ENCODE measurements at regions of chr5 and their contacts with region 1.

Region 1: DNA sequence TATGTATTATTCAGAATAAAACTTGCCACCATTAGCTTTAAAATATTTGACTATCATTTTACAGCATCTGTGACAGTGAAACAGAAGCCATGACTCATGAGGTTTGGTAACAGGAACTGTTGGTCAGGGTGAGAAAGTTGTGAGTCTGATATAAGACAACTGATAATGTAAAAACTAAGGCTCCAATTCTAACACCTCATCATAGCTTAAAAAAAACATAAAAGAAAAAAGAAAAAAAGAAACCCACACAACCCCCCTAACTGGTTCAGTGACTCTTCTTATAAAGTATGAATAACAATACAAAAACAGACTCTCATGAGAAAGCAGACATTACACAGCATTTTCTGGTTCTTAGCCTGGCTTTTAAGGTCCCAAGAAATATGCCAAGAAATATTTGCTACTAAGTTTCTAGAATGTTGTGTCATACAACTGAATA is 85.8 kb downstream of the MRPS27 start:
- DNase-seq: peak; percentile 47
- H3K4me3 Mint-ChIP-seq: no peak overlapping the region
- H3K27ac Mint-ChIP-seq: peak overlapping the region; percentile 30
- H3K4me1 Mint-ChIP-seq: peaks cover 46% of the 10 kb centered on the region
- H3K27me3 Mint-ChIP-seq: no peaks in the 10 kb centered on the region

Region 2: DNA sequence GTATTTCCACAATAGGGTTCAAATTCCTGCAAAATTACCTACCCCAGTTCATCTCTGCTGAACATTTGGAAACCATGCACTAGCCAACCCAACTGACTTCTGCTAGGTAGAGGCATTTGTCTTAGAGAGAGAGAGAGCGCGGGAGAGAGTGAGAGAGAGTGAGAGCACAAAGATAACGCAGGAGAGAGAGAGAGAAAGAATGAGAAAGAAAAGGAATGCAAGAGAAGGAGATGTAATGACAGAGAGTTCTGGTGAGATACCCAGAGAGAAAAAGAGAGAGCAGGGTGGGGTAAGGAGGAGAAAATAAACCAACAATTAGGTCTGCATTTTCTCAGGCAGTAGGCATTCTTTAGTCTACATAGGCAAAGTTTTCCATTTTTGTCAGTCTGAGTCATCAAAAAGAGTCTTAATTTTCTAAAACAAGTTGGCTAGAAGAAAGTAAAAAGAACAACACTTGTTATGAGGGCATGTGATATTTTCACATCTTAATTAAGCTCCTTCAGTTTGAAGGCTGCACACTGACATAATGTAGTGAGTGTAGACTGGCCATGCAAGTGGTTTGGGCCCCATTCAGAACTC is 28.8 kb before region 1 on chr5:
- CTCF ChIA-PET with region 1: no interaction called
- intact Hi-C with region 1: loop called (anchors 1 kb)
- DNase-seq: no peak
- H3K4me3 Mint-ChIP-seq: no peak overlapping the region
- H3K27ac Mint-ChIP-seq: no peak overlapping the region
- H3K4me1 Mint-ChIP-seq: peaks cover 17% of the 10 kb centered on the region
- H3K27me3 Mint-ChIP-seq: no peaks in the 10 kb centered on the region

Region 3: GRCh38 chr5:72307968-72308852 is 73.9 kb after region 1 on chr5:
- CTCF ChIA-PET with region 1: interaction called, 4 read pairs
- intact Hi-C with region 1: loop called (anchors 1 kb)
- DNase-seq: peak; percentile 94
- H3K4me3 Mint-ChIP-seq: peak overlapping the region; percentile 85
- H3K27ac Mint-ChIP-seq: peak overlapping the region; percentile 92
- H3K4me1 Mint-ChIP-seq: peaks cover 32% of the 10 kb centered on the region
- H3K27me3 Mint-ChIP-seq: no peaks in the 10 kb centered on the region

Region 4: DNA sequence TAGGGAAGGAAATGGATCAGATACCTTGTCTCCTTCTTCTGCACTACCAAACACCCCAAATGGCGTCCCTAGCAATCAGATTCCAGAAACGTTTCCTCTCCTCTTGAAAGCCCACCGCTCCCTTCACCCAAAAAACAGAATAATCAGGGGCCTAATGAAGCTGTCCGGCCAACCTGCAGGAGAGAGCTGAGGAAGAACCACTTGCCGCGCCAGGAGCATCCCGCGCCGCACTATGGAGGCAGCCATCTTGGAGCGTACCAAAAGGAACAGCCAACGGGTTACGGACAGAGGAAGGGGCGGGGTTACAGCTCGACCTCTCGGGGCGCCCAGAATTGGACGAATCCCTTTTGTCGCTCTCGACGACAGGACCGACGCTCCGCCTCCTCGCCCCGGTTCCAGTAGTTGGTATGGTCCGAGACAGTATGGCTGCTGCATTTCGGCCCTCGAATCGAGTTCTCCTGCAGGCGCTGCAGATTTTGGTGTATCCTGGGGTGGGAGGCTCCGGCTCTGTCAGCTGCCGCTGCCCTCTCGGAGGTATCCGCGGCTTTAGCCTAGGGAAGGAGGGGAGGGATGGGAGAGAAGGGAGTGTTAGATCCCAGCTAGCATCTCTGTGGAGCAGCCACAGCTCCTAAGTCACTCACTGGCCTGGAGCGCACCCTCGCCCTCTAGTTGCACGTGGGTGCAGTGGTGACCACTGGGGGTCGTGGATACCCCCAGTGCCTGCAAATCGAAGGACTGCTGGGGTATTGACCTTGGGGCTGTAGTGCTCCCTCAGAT is 85.9 kb after region 1 on chr5 and contains the starts of genes MRPS27 and PTCD2:
- CTCF ChIA-PET with region 1: no interaction called
- intact Hi-C with region 1: loop called (anchors 1 kb)
- DNase-seq: peak; percentile 97
- H3K4me3 Mint-ChIP-seq: peak within 1 kb of the TSS; percentile 80
- H3K27ac Mint-ChIP-seq: peak within 1 kb of the TSS; percentile 91
- H3K4me1 Mint-ChIP-seq: peaks cover 45% of the 10 kb centered on the region
- H3K27me3 Mint-ChIP-seq: no peaks in the 10 kb centered on the region
- total RNA-seq, gene MRPS27: 86.0 to 95.8 TPM
- total RNA-seq, gene PTCD2: 10.1 to 11.6 TPM

Region 5: GRCh38 chr5:72347801-72348305 is 113.6 kb after region 1 on chr5:
- CTCF ChIA-PET with region 1: no interaction called
- intact Hi-C with region 1: loop called (anchors 2 kb)
- DNase-seq: peak; percentile 36
- H3K4me3 Mint-ChIP-seq: no peak overlapping the region
- H3K27ac Mint-ChIP-seq: peak overlapping the region; percentile 48
- H3K4me1 Mint-ChIP-seq: peaks cover 24% of the 10 kb centered on the region
- H3K27me3 Mint-ChIP-seq: no peaks in the 10 kb centered on the region

Region 6: DNA sequence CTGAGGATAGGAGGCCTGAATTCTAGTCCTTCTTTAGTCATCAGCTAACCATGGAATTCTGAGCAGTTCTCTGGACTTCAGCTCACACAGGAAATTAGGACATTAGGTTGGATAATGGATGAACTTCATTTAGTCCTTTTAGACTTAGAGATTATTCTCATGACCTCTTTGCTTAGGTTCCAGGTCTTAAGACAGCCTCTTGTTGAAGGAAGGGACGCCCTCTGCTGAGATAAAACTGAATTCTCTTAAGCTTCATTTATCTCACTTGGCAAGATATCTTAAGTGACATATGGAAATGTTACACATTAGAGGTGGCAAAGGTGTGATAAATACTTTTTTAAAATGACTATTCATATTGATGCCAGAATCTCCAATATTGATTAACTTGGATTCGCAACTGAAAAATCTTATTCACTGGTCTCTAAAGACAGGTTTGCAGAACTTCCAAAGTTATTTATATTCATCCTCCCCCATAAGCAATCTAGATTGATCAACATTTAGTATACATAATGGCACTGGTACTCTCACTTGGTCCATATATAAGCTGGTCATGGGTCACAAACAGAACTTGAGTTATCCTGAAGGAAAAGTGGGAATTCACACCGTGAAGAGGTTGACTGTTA is 289.8 kb after region 1 on chr5:
- CTCF ChIA-PET with region 1: no interaction called
- intact Hi-C with region 1: no loop called
- DNase-seq: no peak
- H3K4me3 Mint-ChIP-seq: no peak overlapping the region
- H3K27ac Mint-ChIP-seq: no peak overlapping the region
- H3K4me1 Mint-ChIP-seq: no peaks in the 10 kb centered on the region
- H3K27me3 Mint-ChIP-seq: no peaks in the 10 kb centered on the region

Region 7: GRCh38 chr5:72847989-72848473 is 613.7 kb after region 1 on chr5:
- CTCF ChIA-PET with region 1: no interaction called
- intact Hi-C with region 1: loop called (anchors 5 kb)
- DNase-seq: peak; percentile 90
- H3K4me3 Mint-ChIP-seq: peak overlapping the region; percentile 97
- H3K27ac Mint-ChIP-seq: peak overlapping the region; percentile 97
- H3K4me1 Mint-ChIP-seq: peaks cover 49% of the 10 kb centered on the region
- H3K27me3 Mint-ChIP-seq: no peaks in the 10 kb centered on the region

Measured in activated naive CD4-positive, alpha-beta T cell treated with anti-CD3 and anti-CD28 coated beads for 36 hours (primary cell).